Common myeloid progenitor, CD34-positive (primary cell): ENCODE measurements at regions of chr3 and their contacts with region 1.

Region 1: DNA sequence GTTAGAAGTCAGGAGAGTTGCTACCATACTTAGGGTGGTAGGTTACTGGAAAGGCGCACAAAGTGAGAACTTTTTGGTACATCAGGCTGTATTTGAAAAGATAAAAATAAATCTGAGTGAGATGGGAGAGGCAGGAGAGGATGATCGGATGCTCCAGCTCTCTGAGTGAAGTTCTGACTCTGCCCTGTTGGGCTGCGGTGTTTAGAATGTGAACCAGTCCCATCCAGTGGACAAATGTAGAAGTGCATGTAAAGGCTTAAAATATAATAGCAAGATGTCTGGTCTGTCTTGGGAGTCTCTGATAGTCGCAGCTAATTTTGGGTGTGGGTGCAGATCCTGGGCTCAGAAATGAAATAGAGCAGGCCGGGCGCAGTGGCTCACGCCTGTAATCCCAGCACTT is 30.4 kb downstream of the ACKR2 start:
- DNase-seq: peak; percentile 60 to 82 (median 82)
- H3K4me3 ChIP-seq: no peak overlapping the region
- H3K27ac ChIP-seq: no peak overlapping the region
- H3K4me1 ChIP-seq: no peaks in the 10 kb centered on the region
- H3K27me3 ChIP-seq: no peaks in the 10 kb centered on the region

Region 2: DNA sequence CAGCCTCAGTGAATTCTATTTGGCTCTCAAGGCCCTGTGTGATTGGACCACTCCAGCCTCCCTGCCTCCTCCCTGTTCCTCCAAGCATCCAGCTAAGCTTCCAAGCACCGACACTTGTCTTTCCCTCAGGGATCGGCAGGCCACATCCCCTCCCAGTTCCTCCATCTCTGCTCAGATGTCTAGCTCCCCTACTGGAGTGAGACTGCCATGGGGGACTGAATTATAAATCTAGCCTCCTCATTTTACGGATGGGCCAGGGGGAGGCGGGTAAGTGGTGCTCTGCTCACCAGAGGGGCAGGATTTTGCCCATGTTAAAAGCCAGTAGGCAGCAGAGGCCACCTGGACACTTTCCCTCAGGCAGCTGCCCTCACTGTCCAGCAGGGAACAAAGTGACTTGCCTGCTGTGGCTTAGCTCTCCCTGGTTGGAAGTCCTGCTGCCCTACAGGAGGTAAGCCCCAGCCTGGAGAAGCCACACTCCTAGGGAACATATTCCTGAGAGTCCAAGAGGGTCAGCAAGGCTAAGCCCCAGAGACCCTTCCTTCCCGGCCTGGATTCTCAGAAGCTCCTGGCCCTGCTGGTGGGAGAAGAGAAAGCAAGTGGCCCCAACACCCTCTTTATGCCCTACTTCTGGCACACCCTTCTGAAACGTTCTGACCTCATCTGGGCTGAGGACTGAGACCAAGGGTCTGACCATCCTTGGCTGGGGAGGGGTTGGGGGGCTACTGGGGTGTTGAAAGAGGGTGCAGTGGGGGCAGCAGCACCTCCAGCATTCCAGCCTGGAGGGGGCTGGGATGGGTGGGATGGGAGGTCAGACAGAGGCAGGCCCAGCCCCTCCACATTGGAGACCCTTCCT is 127.9 kb before region 1 on chr3:
- CTCF ChIA-PET with region 1: no interaction called
- POLR2A ChIA-PET with region 1: no interaction called
- DNase-seq: no peak
- H3K4me3 ChIP-seq: no peak overlapping the region
- H3K27ac ChIP-seq: no peak overlapping the region
- H3K4me1 ChIP-seq: no peaks in the 10 kb centered on the region
- H3K27me3 ChIP-seq: peaks cover 0 to 4% (median 0%) of the 10 kb centered on the region in 5 experiments

Region 3: GRCh38 chr3:42764561-42765295 is 74.9 kb before region 1 on chr3:
- CTCF ChIA-PET with region 1: no interaction called
- POLR2A ChIA-PET with region 1: no interaction called
- DNase-seq: no peak
- H3K4me3 ChIP-seq: no peak overlapping the region
- H3K27ac ChIP-seq: no peak overlapping the region
- H3K4me1 ChIP-seq: peaks cover 0 to 21% (median 7%) of the 10 kb centered on the region in 4 experiments
- H3K27me3 ChIP-seq: no peaks in the 10 kb centered on the region

Region 4: GRCh38 chr3:42852441-42852840 is 12.8 kb after region 1 on chr3:
- CTCF ChIA-PET with region 1: interaction called, 18 read pairs
- POLR2A ChIA-PET with region 1: no interaction called
- DNase-seq: peak in 2 of 3 donors; percentile 51 to 76
- H3K4me3 ChIP-seq: no peak overlapping the region
- H3K27ac ChIP-seq: no peak overlapping the region
- H3K4me1 ChIP-seq: peaks cover 0 to 5% (median 5%) of the 10 kb centered on the region in 4 experiments
- H3K27me3 ChIP-seq: peaks cover 0 to 4% (median 0%) of the 10 kb centered on the region in 5 experiments